Dorsolateral prefrontal cortex (tissue), 120 donors: ENCODE measurements at regions of chr3 and their contacts with region 1.

Region 1: GRCh38 chr3:9951962-9952805 is at the start of gene PRRT3:
- DNase-seq: peak in 8 of 10 donors; percentile 46 to 76 (median 66)
- H3K4me3 ChIP-seq: peak within 1 kb of the TSS; percentile 41 to 84 (median 75)
- H3K27ac ChIP-seq: peak within 1 kb of the TSS in 54 of 59 donors; percentile 19 to 91 (median 77)
- H3K27me3 ChIP-seq: no peaks in the 10 kb centered on the region
- CTCF ChIP-seq: no peak
- total RNA-seq, gene PRRT3: 13.3 to 49.4 (median 36.1) TPM

Region 2: DNA sequence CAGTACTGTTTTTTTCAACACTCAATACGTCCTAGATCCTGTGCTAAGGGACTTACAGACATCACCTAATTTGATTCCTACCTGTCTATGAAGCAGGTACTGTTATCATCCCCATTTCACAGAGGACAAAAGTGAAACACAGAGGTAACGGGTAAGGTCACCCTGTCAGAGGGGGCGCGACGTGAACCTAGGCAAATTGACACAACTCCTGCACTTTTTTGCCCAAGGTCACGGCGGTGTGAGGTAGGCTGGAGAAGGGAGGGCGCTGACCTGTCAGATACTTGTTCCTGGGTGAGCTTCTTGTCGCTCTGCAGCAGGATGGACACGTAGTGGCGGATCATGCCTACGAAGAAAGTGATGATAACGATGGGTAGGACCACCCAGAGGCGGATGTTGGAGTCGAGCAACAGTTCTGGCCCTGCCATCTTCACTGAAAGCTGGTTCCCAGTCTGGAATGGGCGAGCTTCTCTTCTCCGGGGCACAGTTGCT is 34.1 kb after region 1 on chr3:
- intact Hi-C with region 1: loop called in 1 of 2 experiments (anchors 5 kb)
- DNase-seq: no peak
- H3K4me3 ChIP-seq: peak overlapping the region; percentile 67 to 100 (median 93)
- H3K27ac ChIP-seq: peak overlapping the region in 49 of 59 donors; percentile 1 to 91 (median 68)
- H3K27me3 ChIP-seq: no peaks in the 10 kb centered on the region
- CTCF ChIP-seq: no peak

Region 3: DNA sequence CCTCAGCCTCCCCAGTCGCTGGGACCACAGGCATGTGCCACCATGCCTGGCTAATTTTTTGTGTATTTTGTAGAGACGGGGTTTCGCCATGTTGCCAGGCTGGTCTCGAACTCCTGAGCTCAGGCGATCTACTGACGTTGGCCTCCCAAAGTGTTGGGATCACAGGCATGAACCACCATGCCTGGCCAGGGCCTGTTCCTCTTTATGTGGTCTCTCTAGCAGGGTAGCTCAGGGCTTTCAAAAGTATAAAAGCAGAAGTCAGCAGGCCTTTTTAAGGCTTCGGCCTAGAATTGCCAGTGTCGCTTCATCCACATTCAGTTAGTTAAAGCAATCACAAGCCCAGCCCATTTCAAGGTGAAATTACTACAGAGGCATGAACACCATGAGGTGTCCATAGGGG is 197.0 kb after region 1 on chr3:
- intact Hi-C with region 1: no loop called
- DNase-seq: no peak
- H3K4me3 ChIP-seq: no peak overlapping the region
- H3K27ac ChIP-seq: no peak overlapping the region
- H3K27me3 ChIP-seq: no peaks in the 10 kb centered on the region
- CTCF ChIP-seq: no peak

Region 4: GRCh38 chr3:10322352-10322710 is 370.1 kb after region 1 on chr3:
- intact Hi-C with region 1: loop called in 1 of 2 experiments (anchors 10 kb)
- DNase-seq: peak in 1 of 10 donors; percentile 12
- H3K4me3 ChIP-seq: no peak overlapping the region
- H3K27ac ChIP-seq: peak overlapping the region in 1 of 59 donors; percentile 9
- H3K27me3 ChIP-seq: no peaks in the 10 kb centered on the region
- CTCF ChIP-seq: peak in 29 of 56 donors; percentile 12 to 41 (median 23)